ENCODE measurements at regions of chr19 and their contacts with region 1.

Region 1: DNA sequence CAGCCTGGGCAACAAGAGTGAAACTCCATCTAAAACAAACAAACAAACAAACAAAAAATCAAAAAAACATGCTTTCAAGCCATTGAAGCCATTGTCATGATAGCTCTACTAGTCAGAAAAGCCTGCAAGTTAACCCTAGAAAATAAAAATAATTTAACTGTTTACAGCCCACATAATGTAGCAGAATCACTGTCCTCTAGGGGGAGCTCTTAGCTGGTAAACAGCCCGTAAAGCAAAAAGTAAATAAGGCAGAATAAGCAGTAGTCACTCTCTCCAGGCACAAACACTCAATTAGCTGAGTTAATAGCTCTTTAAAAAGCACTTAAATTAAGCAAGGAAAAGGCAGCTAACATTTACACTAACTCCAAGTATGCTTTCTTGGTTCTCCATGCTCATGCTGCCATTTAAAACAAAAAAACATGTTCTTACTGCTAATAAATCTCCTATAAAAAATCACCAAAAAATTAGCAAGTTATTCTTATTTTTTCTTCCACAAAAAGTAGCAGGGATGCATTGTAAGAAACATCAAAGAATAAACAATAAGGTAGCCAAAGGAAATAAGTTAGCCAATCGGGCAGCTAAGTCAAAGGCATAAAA is 11.3 kb downstream of the LILRB4 start:
- DNase-seq: peak; percentile 28
- H3K4me3 Mint-ChIP-seq: no peak overlapping the region
- H3K27ac Mint-ChIP-seq: no peak overlapping the region
- H3K4me1 Mint-ChIP-seq: no peaks in the 10 kb centered on the region
- H3K27me3 Mint-ChIP-seq: peaks cover 53% of the 10 kb centered on the region
- CTCF ChIP-seq: peak; percentile 79

Region 2: GRCh38 chr19:53086949-53087348 is 1587.2 kb before region 1 on chr19:
- CTCF ChIA-PET with region 1: no interaction called
- intact Hi-C with region 1: no loop called
- DNase-seq: no peak
- H3K4me3 Mint-ChIP-seq: no peak overlapping the region
- H3K27ac Mint-ChIP-seq: no peak overlapping the region
- H3K4me1 Mint-ChIP-seq: no peaks in the 10 kb centered on the region
- H3K27me3 Mint-ChIP-seq: no peaks in the 10 kb centered on the region
- CTCF ChIP-seq: no peak

Region 3: GRCh38 chr19:54481322-54481930 is 192.7 kb before region 1 on chr19:
- CTCF ChIA-PET with region 1: interaction called, 3 read pairs
- intact Hi-C with region 1: loop called (anchors 1 kb)
- DNase-seq: peak; percentile 62
- H3K4me3 Mint-ChIP-seq: no peak overlapping the region
- H3K27ac Mint-ChIP-seq: no peak overlapping the region
- H3K4me1 Mint-ChIP-seq: no peaks in the 10 kb centered on the region
- H3K27me3 Mint-ChIP-seq: peaks cover 64% of the 10 kb centered on the region
- CTCF ChIP-seq: peak; percentile 58

Region 4: GRCh38 chr19:54662730-54663129 is 11.4 kb before region 1 on chr19 and contains the start of gene LILRB4:
- CTCF ChIA-PET with region 1: no interaction called
- intact Hi-C with region 1: no loop called
- DNase-seq: no peak
- H3K4me3 Mint-ChIP-seq: no peak within 1 kb of the TSS
- H3K27ac Mint-ChIP-seq: no peak within 1 kb of the TSS
- H3K4me1 Mint-ChIP-seq: no peaks in the 10 kb centered on the region
- H3K27me3 Mint-ChIP-seq: peaks cover 77% of the 10 kb centered on the region
- CTCF ChIP-seq: no peak
- total RNA-seq, gene LILRB4: not detected in 2 replicates

Region 5: GRCh38 chr19:54684527-54684926 is 10.4 kb after region 1 on chr19:
- CTCF ChIA-PET with region 1: interaction called, 10 read pairs
- intact Hi-C with region 1: no loop called
- DNase-seq: peak; percentile 37
- H3K4me3 Mint-ChIP-seq: no peak overlapping the region
- H3K27ac Mint-ChIP-seq: no peak overlapping the region
- H3K4me1 Mint-ChIP-seq: no peaks in the 10 kb centered on the region
- H3K27me3 Mint-ChIP-seq: peaks cover 21% of the 10 kb centered on the region
- CTCF ChIP-seq: no peak

Region 6: GRCh38 chr19:54875506-54875905 is 201.4 kb after region 1 on chr19:
- CTCF ChIA-PET with region 1: no interaction called
- intact Hi-C with region 1: no loop called
- DNase-seq: no peak
- H3K4me3 Mint-ChIP-seq: no peak overlapping the region
- H3K27ac Mint-ChIP-seq: no peak overlapping the region
- H3K4me1 Mint-ChIP-seq: no peaks in the 10 kb centered on the region
- H3K27me3 Mint-ChIP-seq: peaks cover 76% of the 10 kb centered on the region
- CTCF ChIP-seq: no peak

Measured in Calu3 (cell line).